Dorsolateral prefrontal cortex (tissue), 120 donors: ENCODE measurements at regions of chr9 and their contacts with region 1.

Region 1: DNA sequence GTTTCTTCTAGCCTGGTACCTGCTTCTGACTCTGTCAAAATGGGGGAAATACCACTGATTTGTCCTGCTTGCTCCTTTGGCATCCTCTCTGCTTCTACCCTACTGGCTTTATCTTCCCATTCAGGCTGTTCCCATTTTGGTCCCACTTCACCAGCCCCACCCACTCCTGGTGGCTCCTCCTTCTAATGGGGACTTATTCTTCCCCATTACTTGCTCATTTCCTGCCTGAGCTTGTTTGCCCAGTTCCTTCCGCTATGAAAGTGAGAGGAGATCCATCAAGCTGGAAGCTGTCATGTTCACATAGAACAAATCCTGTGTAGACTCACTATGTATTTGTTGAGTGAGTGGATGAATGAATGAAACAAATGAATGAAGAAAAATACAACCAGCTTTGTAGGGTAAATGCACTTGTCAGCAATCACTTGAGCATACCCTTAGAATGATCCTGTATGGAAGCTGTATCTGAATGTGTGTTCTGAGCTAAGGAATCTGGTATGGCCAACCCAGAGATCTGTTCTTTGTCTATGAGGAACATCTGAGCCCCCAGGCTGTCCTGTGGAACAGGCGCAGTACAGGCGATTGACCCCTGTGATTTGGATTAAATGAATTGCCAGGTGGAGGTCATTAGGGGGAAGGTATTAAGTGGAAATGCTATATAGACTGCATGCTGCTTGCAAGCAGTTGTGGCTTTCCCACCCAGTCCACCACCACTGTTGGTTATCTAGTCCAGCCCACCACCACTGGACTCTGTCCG is 89.5 kb downstream of the APBA1 start:
- DNase-seq: no peak
- H3K4me3 ChIP-seq: no peak overlapping the region
- H3K27ac ChIP-seq: no peak overlapping the region
- H3K27me3 ChIP-seq: no peaks in the 10 kb centered on the region
- CTCF ChIP-seq: no peak

Region 2: DNA sequence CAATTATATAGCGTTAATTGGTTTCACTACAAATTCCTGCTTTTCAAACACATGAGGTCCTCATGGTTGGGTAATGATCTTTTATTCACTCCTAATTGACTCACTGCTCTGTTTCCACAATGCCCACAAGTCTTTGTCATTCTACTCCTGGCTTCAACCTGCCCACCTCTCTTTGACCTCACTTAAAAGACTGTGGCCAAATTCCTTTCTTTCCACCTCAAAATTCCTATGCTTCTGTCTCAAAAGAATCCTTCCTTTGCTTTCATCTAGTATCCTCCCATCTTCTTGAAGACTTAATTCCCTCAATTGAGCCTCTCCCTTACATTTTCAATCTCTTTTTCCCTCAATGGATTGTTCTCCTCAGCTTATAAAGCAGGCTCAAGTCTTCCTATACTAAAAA is 84.6 kb after region 1 on chr9:
- intact Hi-C with region 1: loop called in 1 of 2 experiments (anchors 10 kb)
- DNase-seq: no peak
- H3K4me3 ChIP-seq: no peak overlapping the region
- H3K27ac ChIP-seq: no peak overlapping the region
- H3K27me3 ChIP-seq: no peaks in the 10 kb centered on the region
- CTCF ChIP-seq: no peak